Endothelial cell of umbilical vein (primary cell): ENCODE measurements at regions of chr11 and their contacts with region 1.

Region 1: GRCh38 chr11:12087075-12088004 is 23.1 kb upstream of the MICAL2 start:
- DNase-seq: peak; percentile 50
- H3K4me3 ChIP-seq: peak overlapping the region in 1 of 3 experiments; percentile 54
- H3K27ac ChIP-seq: peak overlapping the region; percentile 99
- H3K4me1 ChIP-seq: peaks cover 76% of the 10 kb centered on the region
- H3K27me3 ChIP-seq: no peaks in the 10 kb centered on the region
- CTCF ChIP-seq: peak; percentile 14 to 35
- POLR2A ChIP-seq: peak; percentile 50

Region 2: GRCh38 chr11:11977206-11977938 is 110.0 kb before region 1 on chr11:
- CTCF ChIA-PET with region 1: no interaction called
- POLR2A ChIA-PET with region 1: interaction called, 5 read pairs
- dilution Hi-C with region 1: no loop called
- intact Hi-C with region 1: loop called (anchors 1 kb)
- DNase-seq: peak; percentile 95
- H3K4me3 ChIP-seq: no peak overlapping the region
- H3K27ac ChIP-seq: peak overlapping the region; percentile 95
- H3K4me1 ChIP-seq: peaks cover 55% of the 10 kb centered on the region
- H3K27me3 ChIP-seq: no peaks in the 10 kb centered on the region
- CTCF ChIP-seq: no peak
- POLR2A ChIP-seq: peak; percentile 51

Region 3: DNA sequence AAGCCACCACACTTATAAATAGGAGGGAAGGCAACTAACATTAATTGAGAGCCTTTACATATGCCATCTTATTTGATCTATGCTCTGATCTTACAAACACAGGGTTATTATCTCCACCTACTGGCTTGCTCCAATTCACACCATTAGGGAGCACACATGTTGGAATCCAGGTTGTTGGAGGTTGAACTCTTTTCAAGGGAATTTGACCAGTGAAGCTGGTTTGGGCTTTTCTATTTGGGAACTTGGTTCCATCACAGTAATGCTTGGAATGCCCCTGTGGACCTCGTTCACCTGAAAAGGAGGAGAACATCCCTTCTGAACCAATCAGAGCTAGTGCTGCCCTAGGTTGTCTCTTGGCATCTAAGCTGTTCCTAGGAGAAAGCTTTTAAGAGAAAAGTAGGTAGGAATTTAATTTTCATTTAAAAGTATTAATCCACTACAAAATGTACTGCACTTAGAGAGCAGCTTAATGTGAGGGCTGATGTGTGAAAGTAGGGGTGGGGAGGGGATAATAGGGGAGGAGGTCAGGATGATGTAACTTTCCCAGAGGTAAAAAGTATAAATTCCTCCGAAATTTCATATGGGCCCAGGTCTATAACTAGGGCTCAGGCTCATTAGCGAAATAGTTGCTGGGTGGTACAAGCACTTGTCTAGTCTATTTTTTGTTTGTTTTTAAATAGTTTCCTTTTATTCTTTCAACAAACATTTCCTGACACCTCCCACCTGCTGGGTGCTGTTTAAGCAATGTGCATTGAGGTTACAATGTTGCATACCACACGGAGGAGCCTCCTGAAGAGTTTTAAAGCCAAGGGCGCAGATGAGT is 15.5 kb after region 1 on chr11:
- CTCF ChIA-PET with region 1: interaction called, 19 read pairs
- POLR2A ChIA-PET with region 1: interaction called, 3 read pairs
- dilution Hi-C with region 1: no loop called
- intact Hi-C with region 1: no loop called
- DNase-seq: no peak
- H3K4me3 ChIP-seq: no peak overlapping the region
- H3K27ac ChIP-seq: no peak overlapping the region
- H3K4me1 ChIP-seq: no peaks in the 10 kb centered on the region
- H3K27me3 ChIP-seq: no peaks in the 10 kb centered on the region
- CTCF ChIP-seq: no peak
- POLR2A ChIP-seq: no peak

Region 4: GRCh38 chr11:12122083-12122482 is 34.7 kb after region 1 on chr11:
- CTCF ChIA-PET with region 1: interaction called, 10 read pairs
- POLR2A ChIA-PET with region 1: interaction called, 3 read pairs
- dilution Hi-C with region 1: no loop called
- intact Hi-C with region 1: loop called (anchors 1 kb)
- DNase-seq: no peak
- H3K4me3 ChIP-seq: no peak overlapping the region
- H3K27ac ChIP-seq: no peak overlapping the region
- H3K4me1 ChIP-seq: peaks cover 38% of the 10 kb centered on the region
- H3K27me3 ChIP-seq: no peaks in the 10 kb centered on the region
- CTCF ChIP-seq: peak; percentile 43 to 56
- POLR2A ChIP-seq: no peak

Region 5: DNA sequence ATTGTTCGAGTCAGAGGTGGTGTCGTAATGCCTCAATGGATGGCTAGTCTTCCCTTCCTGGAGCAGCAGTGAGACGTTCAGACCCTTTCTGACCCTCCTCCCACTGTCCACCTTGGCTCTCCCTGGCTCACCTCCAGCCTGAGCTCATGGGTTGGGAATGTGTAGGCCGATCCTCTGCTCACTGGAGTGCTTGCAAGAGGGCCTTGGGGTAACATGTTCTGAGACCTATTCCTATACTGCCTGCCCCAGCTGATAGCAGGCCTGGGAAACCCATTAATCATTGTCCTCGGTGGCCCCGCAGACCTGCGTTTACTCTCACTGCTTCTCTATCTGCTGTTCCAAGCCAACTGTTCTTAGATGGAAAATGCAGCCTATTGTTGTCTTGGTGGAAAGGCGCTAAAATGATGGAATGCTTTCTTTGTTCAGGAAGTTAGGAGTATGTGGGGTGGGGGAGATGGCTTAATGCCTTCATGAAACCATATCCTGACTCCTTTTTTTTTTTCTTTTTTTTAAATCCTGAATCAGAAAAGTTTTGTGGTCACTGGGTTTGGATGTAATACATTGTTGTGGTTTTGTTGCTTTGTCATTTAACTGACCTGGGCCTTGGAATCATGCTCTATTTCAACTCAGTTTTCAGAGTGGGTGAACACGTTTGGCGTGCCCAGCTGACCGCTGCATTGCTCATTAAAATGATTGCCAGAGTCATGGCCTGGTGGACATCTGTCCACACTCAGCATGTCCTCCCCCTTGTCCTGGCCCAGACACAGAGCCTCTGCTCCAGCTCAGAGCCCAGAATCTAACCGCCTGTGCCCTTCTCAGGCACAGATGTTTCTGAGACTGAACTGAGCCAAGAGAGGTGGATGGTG is 95.6 kb after region 1 on chr11:
- CTCF ChIA-PET with region 1: interaction called, 15 read pairs
- POLR2A ChIA-PET with region 1: no interaction called
- dilution Hi-C with region 1: no loop called
- intact Hi-C with region 1: loop called (anchors 1 kb)
- DNase-seq: peak; percentile 89
- H3K4me3 ChIP-seq: no peak overlapping the region
- H3K27ac ChIP-seq: peak overlapping the region; percentile 99
- H3K4me1 ChIP-seq: peaks cover 54% of the 10 kb centered on the region
- H3K27me3 ChIP-seq: no peaks in the 10 kb centered on the region
- CTCF ChIP-seq: no peak
- POLR2A ChIP-seq: no peak

Region 6: GRCh38 chr11:12224537-12224893 is 137.2 kb after region 1 on chr11:
- CTCF ChIA-PET with region 1: interaction called, 26 read pairs
- POLR2A ChIA-PET with region 1: interaction called, 4 read pairs
- dilution Hi-C with region 1: no loop called
- intact Hi-C with region 1: loop called (anchors 1 kb)
- DNase-seq: peak; percentile 28
- H3K4me3 ChIP-seq: no peak overlapping the region
- H3K27ac ChIP-seq: peak overlapping the region; percentile 65
- H3K4me1 ChIP-seq: peaks cover 35% of the 10 kb centered on the region
- H3K27me3 ChIP-seq: no peaks in the 10 kb centered on the region
- CTCF ChIP-seq: no peak
- POLR2A ChIP-seq: no peak

Region 7: GRCh38 chr11:12318791-12319438 is 231.6 kb after region 1 on chr11:
- CTCF ChIA-PET with region 1: no interaction called
- POLR2A ChIA-PET with region 1: no interaction called
- dilution Hi-C with region 1: no loop called
- intact Hi-C with region 1: no loop called
- DNase-seq: no peak
- H3K4me3 ChIP-seq: no peak overlapping the region
- H3K27ac ChIP-seq: no peak overlapping the region
- H3K4me1 ChIP-seq: no peaks in the 10 kb centered on the region
- H3K27me3 ChIP-seq: no peaks in the 10 kb centered on the region
- CTCF ChIP-seq: no peak
- POLR2A ChIP-seq: no peak